ENCODE measurements at regions of chr6 and their contacts with region 1.

Region 1: GRCh38 chr6:31462964-31463870 is 34.7 kb upstream of the MICB start:
- DNase-seq: peak; percentile 93
- ATAC-seq: peak; percentile 99
- H3K4me3 Mint-ChIP-seq: peak overlapping the region; percentile 79
- H3K27ac Mint-ChIP-seq: no peak overlapping the region
- H3K4me1 Mint-ChIP-seq: peaks cover 10% of the 10 kb centered on the region
- H3K27me3 Mint-ChIP-seq: peaks cover 45% of the 10 kb centered on the region
- CTCF ChIP-seq: no peak

Region 2: DNA sequence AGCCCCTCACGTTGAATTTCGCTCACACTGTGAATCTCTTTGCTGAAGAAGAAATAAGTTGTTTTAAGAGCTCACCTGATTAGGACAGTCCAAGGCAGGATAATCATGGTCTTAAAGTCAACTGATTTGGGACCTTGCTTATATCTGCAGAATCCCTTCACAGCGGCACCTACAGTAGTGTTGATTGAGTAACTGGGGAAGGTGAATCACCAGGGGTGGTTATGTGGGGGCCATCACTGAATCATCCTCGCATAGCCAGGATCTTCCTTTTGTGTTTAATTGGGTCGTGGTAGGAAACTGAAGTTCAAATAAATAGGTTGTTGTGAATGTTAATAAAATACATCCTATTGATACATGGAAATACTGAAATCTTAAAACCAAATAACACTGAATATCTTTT is 80.1 kb before region 1 on chr6:
- CTCF ChIA-PET with region 1: no interaction called
- POLR2A ChIA-PET with region 1: no interaction called
- DNase-seq: no peak
- ATAC-seq: no peak
- H3K4me3 Mint-ChIP-seq: no peak overlapping the region
- H3K27ac Mint-ChIP-seq: no peak overlapping the region
- H3K4me1 Mint-ChIP-seq: peaks cover 10% of the 10 kb centered on the region
- H3K27me3 Mint-ChIP-seq: no peaks in the 10 kb centered on the region; the same call in 1 of the 2 replicates
- CTCF ChIP-seq: no peak

Region 3: GRCh38 chr6:31403283-31403989 is 59.8 kb before region 1 on chr6 and contains the start of gene MICA:
- CTCF ChIA-PET with region 1: interaction called, 15 read pairs
- POLR2A ChIA-PET with region 1: interaction called, 4 read pairs
- DNase-seq: peak; percentile 94
- ATAC-seq: peak; percentile 79
- H3K4me3 Mint-ChIP-seq: peak within 1 kb of the TSS; percentile 98
- H3K27ac Mint-ChIP-seq: peak within 1 kb of the TSS; percentile 96
- H3K4me1 Mint-ChIP-seq: peaks cover 55% of the 10 kb centered on the region
- H3K27me3 Mint-ChIP-seq: peaks cover 24% of the 10 kb centered on the region
- CTCF ChIP-seq: no peak
- total RNA-seq, gene MICA: 11.4 to 12.9 TPM (median 11.7 TPM) in 3 replicates

Region 4: GRCh38 chr6:31513456-31514165 is 50.4 kb after region 1 on chr6:
- CTCF ChIA-PET with region 1: no interaction called
- POLR2A ChIA-PET with region 1: no interaction called
- DNase-seq: no peak
- ATAC-seq: no peak
- H3K4me3 Mint-ChIP-seq: no peak overlapping the region
- H3K27ac Mint-ChIP-seq: no peak overlapping the region
- H3K4me1 Mint-ChIP-seq: no peaks in the 10 kb centered on the region
- H3K27me3 Mint-ChIP-seq: no peaks in the 10 kb centered on the region
- CTCF ChIP-seq: no peak